ENCODE measurements at regions of chr10 and their contacts with region 1.

Region 1: DNA sequence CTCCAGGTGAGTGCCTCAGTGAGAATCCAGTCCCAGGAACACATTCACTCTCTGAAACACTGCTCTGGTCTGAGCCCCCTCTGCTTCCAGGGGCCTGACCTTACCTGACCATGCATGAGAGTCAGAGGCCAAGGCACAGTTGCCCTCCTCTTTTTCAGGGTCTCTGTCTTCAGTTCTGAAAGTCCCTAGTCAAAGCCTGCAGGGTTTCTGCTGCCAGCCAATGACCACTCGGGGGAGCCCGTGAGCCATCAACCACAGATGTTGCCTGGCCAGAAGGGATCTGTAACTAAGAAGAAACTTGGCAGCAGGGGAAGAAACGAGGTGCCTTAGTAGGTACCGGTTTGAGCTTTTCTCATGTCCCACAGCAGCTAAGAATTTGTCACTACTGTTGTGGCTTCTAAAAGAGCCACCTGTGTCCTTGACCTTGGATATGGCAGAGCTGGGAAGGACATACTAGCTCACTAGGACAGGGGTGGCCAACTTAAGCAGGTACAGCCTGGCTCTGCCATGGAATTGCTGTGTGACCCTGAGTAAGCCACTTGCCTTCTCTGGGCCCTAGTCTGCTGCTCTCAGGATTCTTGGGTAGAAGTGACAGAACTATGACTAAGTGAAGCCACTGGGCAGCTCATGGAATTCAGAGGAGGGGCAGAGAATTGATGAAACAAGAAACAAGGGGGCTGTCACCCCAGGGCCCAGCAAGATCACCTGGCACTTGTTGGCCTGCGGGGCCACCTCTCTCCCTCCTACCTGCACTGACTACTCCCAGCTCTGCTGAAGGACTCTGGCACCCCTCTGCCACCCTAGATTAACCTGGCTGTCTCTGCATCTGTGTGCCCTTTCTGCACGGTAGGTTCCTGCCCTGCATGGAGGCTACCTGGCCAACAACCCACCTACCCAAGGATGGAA is 83.8 kb upstream of the GPR26 start:
- DNase-seq: peak; percentile 75 to 86
- ATAC-seq: peak; percentile 73 to 85 (median 74)
- H3K4me3 ChIP-seq: no peak overlapping the region
- H3K27ac ChIP-seq: no peak overlapping the region
- H3K4me1 ChIP-seq: peaks cover 4% of the 10 kb centered on the region
- H3K27me3 ChIP-seq: peaks cover 0 to 32% (median 1%) of the 10 kb centered on the region in 3 donors
- CTCF ChIP-seq: peak; percentile 79

Region 2: DNA sequence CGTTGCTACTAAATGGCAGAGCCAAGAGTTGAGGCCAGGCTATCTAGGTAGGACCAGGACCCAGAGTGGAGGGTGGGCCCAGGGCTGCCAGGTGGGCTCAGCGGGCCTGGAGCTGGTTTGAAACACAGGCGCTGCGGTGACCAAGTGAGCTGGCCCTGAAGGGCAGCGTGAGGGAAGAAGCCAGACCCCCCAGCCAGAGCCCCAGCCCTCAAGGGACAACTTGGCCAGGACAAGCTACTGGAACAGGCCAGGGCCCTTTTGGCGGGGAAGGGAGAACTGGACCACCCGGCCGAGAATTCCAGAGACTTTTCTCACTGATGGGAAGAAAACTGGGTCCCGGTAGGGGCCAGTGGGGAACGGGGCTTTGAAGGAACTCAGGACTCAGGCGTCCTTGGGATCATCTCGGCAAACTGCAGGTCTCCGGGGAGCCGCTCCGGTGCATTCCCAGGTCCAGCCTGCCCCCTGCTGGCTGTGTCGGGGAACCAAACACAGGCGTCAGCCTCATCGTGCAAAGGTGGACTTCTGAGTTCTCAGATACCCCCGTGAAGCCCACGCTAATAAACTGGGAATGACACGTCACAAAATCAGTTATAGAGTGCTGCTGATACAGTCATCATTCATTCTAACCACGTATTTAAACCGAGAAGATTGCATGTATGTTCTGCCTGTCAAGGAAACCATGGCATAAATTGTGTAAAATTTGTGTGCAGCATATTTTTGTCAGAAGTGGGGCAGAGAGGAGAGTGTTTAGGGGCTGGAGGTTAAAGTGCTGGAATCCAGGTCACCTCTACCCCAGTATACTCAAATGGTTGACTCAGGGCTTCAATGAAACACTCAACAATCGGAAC is 385.3 kb after region 1 on chr10:
- intact Hi-C with region 1: loop called (anchors 1 to 2 kb)
- DNase-seq: peak; percentile 74 to 83
- ATAC-seq: peak; percentile 75 to 90 (median 79)
- H3K4me3 ChIP-seq: no peak overlapping the region
- H3K27ac ChIP-seq: no peak overlapping the region
- H3K4me1 ChIP-seq: peaks cover 5% of the 10 kb centered on the region
- H3K27me3 ChIP-seq: peaks cover 0 to 74% (median 23%) of the 10 kb centered on the region in 3 donors
- CTCF ChIP-seq: peak; percentile 90

Region 3: GRCh38 chr10:124388823-124389612 is 806.7 kb after region 1 on chr10:
- intact Hi-C with region 1: loop called in 1 of 2 experiments (anchors 5 kb)
- DNase-seq: peak; percentile 91 to 95
- ATAC-seq: peak; percentile 98 to 100 (median 100)
- H3K4me3 ChIP-seq: peak overlapping the region; percentile 72
- H3K27ac ChIP-seq: no peak overlapping the region
- H3K4me1 ChIP-seq: no peaks in the 10 kb centered on the region
- H3K27me3 ChIP-seq: no peaks in the 10 kb centered on the region
- CTCF ChIP-seq: peak; percentile 94

Measured in psoas muscle (tissue), 8 donors.